HepG2 (cell line): ENCODE measurements at regions of chr1 and their contacts with region 1.

Region 1: DNA sequence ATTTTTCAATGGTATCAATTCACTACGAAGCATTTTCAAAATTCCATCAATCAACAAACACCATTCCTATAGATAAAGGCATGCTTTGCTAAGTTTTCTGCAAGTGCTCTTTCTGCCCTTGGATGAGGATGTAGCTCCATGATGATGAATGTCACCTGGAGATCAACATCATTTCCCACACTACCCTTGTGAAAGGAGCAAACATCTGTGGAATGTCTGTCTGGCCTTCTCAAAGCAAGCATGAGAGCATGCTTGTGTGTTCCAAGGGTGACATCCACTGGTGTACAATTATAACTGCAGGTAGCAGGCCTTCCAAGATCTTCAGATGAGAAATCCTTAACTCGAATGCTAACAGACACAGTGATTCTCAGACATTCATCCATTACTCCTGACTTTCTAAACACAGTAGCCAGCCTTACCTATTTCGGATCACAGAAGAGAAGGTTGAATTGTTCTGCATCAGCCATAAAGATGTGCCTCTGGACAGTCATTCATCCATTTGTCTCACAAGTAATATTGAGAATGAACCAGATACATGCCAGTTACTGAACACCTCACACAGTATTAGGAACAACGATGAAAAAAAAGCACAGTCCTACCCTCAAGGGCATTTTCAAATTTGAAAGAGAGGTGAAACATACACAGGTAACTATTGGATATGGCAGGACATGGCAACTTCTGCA is 162.4 kb downstream of the TPR start:
- DNase-seq: peak; percentile 74
- ATAC-seq: peak; percentile 95
- H3K4me3 ChIP-seq: no peak overlapping the region
- H3K27ac ChIP-seq: no peak overlapping the region
- H3K4me1 ChIP-seq: no peaks in the 10 kb centered on the region
- H3K27me3 ChIP-seq: no peaks in the 10 kb centered on the region
- CTCF ChIP-seq: peak; percentile 92
- EP300 ChIP-seq: no peak
- POLR2A ChIP-seq: no peak
- RAD21 ChIP-seq: peak; percentile 86

Region 2: GRCh38 chr1:185720633-185721272 is 491.9 kb before region 1 on chr1:
- CTCF ChIA-PET with region 1: interaction called, 5 read pairs
- POLR2A ChIA-PET with region 1: no interaction called
- in situ Hi-C with region 1: loop called (anchors 5 kb)
- intact Hi-C with region 1: no loop called
- DNase-seq: peak; percentile 17
- ATAC-seq: 0 out of 3 replicates have a peak, but pooled peaks have one; percentile 30
- H3K4me3 ChIP-seq: no peak overlapping the region
- H3K27ac ChIP-seq: no peak overlapping the region
- H3K4me1 ChIP-seq: no peaks in the 10 kb centered on the region
- H3K27me3 ChIP-seq: no peaks in the 10 kb centered on the region
- CTCF ChIP-seq: peak; percentile 34; the same call in 1 of the 2 replicates
- EP300 ChIP-seq: no peak
- POLR2A ChIP-seq: no peak
- RAD21 ChIP-seq: no peak

Region 3: DNA sequence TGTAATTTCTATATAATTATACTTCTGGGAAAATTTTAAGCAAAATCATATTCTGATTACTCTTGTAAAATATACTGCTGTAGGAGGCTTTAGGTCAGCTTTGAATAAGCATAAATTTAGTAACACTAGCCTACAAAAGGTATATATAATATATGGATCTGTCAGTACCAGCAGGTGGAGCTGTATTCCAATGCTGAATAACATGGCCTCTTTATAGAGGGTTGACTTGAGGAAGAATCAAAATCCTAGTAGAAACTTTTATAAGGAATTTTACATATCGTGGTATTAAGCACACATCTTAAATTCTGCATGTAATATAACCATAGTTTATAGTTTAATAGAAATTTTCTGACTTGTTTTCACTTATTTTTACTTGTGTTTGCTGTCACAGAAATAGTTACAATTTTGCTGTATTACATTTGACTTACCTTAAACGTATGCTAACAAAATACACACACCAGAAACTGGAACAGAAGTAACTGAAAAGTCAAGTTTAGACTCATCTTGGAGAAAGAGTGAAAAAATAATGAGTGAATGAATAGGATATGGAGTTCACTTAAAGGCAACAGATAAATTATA is 399.2 kb before region 1 on chr1:
- CTCF ChIA-PET with region 1: interaction called, 26 read pairs
- POLR2A ChIA-PET with region 1: no interaction called
- in situ Hi-C with region 1: loop called (anchors 5 kb)
- intact Hi-C with region 1: loop called (anchors 1 kb)
- DNase-seq: peak; percentile 24
- ATAC-seq: peak; percentile 71
- H3K4me3 ChIP-seq: no peak overlapping the region
- H3K27ac ChIP-seq: no peak overlapping the region
- H3K4me1 ChIP-seq: no peaks in the 10 kb centered on the region
- H3K27me3 ChIP-seq: no peaks in the 10 kb centered on the region
- CTCF ChIP-seq: peak; percentile 48
- EP300 ChIP-seq: no peak
- POLR2A ChIP-seq: no peak
- RAD21 ChIP-seq: no peak